AG04449 (cell line): ENCODE measurements at regions of chr20 and their contacts with region 1.

Region 1: DNA sequence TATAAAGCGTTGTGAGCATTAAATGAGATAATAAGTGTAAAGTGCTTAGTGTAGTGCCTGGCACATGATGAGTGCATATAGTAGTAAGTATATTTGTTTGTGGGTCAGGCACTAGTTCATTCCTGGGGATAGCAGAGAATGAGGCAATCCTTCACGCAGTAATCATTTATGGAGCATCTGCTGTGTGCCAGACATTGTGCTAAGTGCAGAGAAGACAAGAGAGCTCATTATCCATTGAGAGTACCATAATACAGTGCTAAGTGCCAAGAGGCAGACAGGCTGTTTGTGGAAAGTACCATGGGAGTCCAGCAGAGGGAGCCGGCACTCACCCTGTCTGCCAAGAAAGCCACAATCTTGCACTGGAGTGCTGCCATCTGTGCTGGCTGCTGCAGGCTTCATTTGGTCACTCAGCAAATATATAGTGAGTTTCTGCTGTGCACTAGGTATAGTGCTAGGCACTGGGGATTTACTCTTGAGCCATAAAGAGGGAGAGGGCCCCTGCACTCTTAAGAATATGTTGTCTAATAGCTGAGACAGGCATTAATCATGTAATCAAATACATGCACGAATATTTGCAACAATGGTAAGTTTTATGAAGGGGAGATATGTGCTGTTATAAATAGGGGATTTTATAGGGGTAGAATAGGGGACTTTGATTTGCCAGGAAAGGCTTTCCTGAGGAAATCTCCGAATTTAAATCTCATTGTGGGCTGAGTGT is 12.9 kb upstream of the MROH8 start:
- DNase-seq: peak; percentile 38
- H3K4me3 ChIP-seq: no peak overlapping the region
- CTCF ChIP-seq: peak; percentile 97

Region 2: DNA sequence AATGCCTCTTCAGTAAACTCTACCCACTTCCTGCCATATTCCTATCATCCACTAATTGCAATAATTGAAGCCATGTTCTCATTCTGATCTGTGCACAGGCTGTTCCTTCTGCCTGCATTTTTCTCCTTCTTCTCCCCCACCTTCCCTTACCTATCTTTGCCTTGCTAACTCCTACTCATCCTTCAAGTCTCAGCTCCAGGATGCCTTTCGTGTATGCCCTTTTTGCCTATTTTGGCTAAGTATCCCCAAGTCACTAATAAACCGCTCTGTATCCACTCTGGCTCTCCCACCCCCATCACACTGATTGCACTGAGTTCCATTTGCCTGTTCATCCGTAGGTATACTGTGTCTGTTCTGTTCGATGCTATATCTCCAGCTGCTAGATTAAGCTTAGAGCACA is 19.5 kb before region 1 on chr20:
- CTCF ChIA-PET with region 1: interaction called, 80 read pairs
- POLR2A ChIA-PET with region 1: interaction called, 3 read pairs
- DNase-seq: no peak
- H3K4me3 ChIP-seq: no peak overlapping the region
- CTCF ChIP-seq: no peak

Region 3: GRCh38 chr20:37202267-37202943 is 10.1 kb after region 1 on chr20:
- CTCF ChIA-PET with region 1: interaction called, 102 read pairs
- POLR2A ChIA-PET with region 1: no interaction called
- DNase-seq: peak; percentile 96
- H3K4me3 ChIP-seq: peak overlapping the region; percentile 47
- CTCF ChIP-seq: peak; percentile 70

Region 4: DNA sequence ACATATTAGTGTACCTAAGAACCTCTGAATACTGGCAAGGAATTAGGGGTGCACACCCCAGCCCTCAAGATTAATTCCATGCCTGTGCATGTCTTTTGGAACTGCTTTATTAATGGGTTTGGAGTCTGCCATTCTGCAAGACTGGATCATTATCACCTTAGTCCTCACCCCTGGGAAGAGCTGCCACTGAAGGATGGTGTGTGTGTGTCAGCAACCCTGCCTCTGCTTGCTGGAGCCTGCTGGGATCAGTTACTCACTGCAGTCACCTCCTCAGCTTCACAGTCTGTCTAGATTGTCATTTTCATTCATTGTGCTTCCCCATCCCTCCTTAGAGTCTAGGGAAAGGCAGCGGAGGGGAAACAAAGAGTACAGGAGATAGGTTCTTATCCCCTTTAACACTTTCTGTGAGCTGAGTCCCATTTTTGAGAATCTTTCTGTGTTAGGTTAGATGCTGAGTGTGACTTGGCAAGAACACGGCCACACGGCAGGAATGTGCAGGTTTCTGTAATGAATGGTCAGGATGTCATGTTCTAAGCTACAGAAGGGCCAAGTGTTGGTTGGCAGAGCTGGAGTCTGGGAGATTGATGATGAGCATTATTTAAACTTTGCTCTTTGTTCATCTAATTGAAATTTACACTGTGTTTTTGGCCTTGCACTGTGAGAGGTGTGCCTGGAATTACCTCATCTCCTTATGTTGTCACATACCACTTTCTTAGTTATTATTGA is 48.2 kb after region 1 on chr20:
- CTCF ChIA-PET with region 1: interaction called, 11 read pairs
- POLR2A ChIA-PET with region 1: no interaction called
- DNase-seq: no peak
- H3K4me3 ChIP-seq: no peak overlapping the region
- CTCF ChIP-seq: no peak

Region 5: GRCh38 chr20:37282556-37282955 is 90.3 kb after region 1 on chr20:
- CTCF ChIA-PET with region 1: interaction called, 11 read pairs
- POLR2A ChIA-PET with region 1: no interaction called
- DNase-seq: no peak
- H3K4me3 ChIP-seq: no peak overlapping the region
- CTCF ChIP-seq: peak; percentile 57

Region 6: GRCh38 chr20:37534401-37535157 is 342.3 kb after region 1 on chr20:
- CTCF ChIA-PET with region 1: interaction called, 227 read pairs
- POLR2A ChIA-PET with region 1: no interaction called
- DNase-seq: no peak
- H3K4me3 ChIP-seq: no peak overlapping the region
- CTCF ChIP-seq: peak; percentile 71